Mammary epithelial cell (primary cell): ENCODE measurements at regions of chr10 and their contacts with region 1.

Region 1: DNA sequence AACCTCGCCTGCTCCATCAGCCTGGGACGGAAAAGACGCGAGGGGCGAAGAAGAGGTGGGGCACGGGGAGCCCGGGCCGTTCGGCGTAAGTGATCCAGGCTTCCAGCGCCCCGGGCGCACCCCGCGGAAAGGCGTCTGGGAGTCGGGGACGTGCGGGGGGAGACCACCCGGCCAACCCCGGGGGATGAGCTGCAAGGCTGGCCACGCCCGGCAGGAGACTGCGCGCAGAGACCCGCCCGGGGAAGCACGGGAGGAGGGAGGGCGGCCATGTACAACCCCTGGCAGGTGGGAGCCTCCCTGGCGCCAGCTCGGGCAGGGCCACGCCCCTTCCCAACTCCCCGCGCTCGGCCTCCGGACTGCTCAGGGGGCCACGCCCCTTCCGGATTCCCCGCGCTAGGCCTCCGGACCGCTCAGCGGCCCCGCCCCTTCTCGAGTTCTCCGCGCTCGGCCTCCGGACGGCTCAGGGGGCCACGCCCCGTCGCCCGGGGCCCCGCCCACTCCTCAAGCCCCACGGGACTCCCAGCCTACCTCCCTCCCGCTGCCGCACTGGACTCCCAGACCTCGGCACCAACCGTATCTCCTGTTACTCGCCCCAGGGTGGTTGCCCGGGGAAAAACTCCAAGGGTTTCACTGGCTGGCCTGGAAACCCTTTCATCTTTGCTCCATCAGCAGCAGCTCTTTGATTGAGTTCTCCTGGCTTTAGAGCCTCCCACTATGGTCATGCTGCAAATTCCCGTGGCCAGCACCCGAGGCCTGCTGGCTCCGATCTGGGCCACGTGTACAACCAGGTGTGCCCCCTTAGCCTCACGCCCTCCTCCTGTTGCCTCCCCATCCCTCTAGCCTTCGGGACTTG is 284.4 kb downstream of the ZEB1 start:
- DNase-seq: peak; percentile 81
- H3K4me3 ChIP-seq: peak overlapping the region; percentile 53 to 73 (median 63)
- H3K27ac ChIP-seq: no peak overlapping the region
- H3K4me1 ChIP-seq: peaks cover 5% of the 10 kb centered on the region
- H3K27me3 ChIP-seq: no peaks in the 10 kb centered on the region
- CTCF ChIP-seq: no peak

Region 2: DNA sequence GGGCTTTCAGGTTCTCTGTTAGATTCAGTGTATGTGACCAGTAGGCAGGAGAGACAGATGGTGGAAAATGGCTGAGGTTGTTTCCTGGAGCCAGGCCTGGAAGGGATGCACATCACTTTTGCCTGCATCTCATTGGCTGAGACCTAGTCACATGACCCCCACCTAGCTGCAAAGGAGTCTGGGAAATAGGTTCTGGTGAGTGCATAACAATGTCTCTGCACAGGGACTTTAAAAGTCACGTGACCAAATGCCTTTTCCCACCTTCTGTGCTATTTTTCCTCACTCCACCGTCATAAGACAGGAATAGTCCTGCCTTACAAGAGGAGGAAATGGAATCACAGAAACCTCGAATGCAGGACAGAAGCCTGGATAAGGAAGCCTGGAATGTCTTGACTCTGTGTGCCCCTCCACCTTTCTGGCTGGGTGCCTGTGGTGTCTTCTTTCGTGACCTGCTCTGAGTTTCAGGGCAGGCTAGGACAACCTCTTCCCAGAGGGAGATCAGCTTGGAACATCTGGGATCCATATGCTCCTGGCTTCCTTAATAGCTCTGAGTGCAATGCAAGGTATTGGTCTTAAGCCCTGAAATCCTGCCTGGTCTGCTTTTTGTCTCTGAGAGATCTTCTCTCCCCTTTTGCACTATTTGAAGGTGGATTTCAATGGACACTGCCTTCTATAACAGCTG is 431.9 kb before region 1 on chr10:
- CTCF ChIA-PET with region 1: no interaction called
- dilution Hi-C with region 1: no loop called
- in situ Hi-C with region 1: no loop called
- intact Hi-C with region 1: no loop called
- DNase-seq: no peak
- H3K4me3 ChIP-seq: no peak overlapping the region
- H3K27ac ChIP-seq: no peak overlapping the region
- H3K4me1 ChIP-seq: no peaks in the 10 kb centered on the region
- H3K27me3 ChIP-seq: no peaks in the 10 kb centered on the region
- CTCF ChIP-seq: no peak

Region 3: GRCh38 chr10:31437959-31438358 is 165.5 kb before region 1 on chr10:
- CTCF ChIA-PET with region 1: no interaction called
- dilution Hi-C with region 1: no loop called
- in situ Hi-C with region 1: no loop called
- intact Hi-C with region 1: no loop called
- DNase-seq: no peak
- H3K4me3 ChIP-seq: no peak overlapping the region
- H3K27ac ChIP-seq: no peak overlapping the region
- H3K4me1 ChIP-seq: no peaks in the 10 kb centered on the region
- H3K27me3 ChIP-seq: no peaks in the 10 kb centered on the region
- CTCF ChIP-seq: no peak

Region 4: GRCh38 chr10:31759799-31760626 is 156.6 kb after region 1 on chr10:
- CTCF ChIA-PET with region 1: no interaction called
- dilution Hi-C with region 1: no loop called
- in situ Hi-C with region 1: no loop called
- intact Hi-C with region 1: loop called (anchors 5 kb)
- DNase-seq: peak; percentile 98
- H3K4me3 ChIP-seq: peak overlapping the region; percentile 85 to 97 (median 87)
- H3K27ac ChIP-seq: peak overlapping the region; percentile 75
- H3K4me1 ChIP-seq: peaks cover 23% of the 10 kb centered on the region
- H3K27me3 ChIP-seq: no peaks in the 10 kb centered on the region
- CTCF ChIP-seq: no peak

Region 5: DNA sequence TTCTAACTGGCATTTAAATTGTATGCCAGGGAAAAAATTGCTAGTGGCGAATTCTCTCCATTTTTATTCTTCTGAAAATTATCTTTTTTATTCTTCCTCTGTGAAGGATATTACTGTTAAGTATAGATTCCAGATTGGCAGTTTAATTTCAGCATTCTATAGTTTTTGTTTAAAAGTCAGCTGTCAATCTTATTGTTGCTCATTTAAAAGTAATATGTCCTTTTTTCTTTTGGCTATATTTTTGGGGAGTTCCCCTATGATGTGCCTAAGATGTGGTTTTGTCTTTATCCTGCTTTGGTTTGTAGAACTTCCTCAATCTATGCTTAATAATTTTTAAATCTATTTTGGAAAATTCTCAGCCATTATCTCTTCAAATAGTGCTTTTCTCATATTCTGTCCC is 189.3 kb after region 1 on chr10:
- CTCF ChIA-PET with region 1: no interaction called
- dilution Hi-C with region 1: no loop called
- in situ Hi-C with region 1: no loop called
- intact Hi-C with region 1: loop called (anchors 10 kb)
- DNase-seq: no peak
- H3K4me3 ChIP-seq: no peak overlapping the region
- H3K27ac ChIP-seq: no peak overlapping the region
- H3K4me1 ChIP-seq: no peaks in the 10 kb centered on the region
- H3K27me3 ChIP-seq: no peaks in the 10 kb centered on the region
- CTCF ChIP-seq: no peak